PC-9 (cell line): ENCODE measurements at regions of chr1 and their contacts with region 1.

Region 1: DNA sequence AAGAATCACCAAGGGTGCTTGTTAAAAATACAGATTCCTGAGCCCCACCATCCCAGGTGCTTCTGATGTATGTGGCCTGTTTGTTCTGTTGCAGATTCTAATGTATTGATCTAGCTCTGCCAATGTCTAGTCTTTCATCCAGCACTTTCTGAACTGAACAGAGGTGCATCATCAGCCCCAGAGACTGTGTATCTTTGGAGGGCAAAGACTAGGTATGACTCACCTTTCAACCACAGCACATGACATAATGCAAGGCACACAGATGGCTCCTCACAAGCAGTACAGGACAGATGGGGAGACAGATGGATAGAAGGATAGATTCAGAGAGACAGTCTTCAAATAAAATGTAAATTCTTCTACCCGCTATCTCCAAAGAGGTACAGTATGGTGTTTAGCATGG is 32.3 kb downstream of the CD58 start:
- DNase-seq: peak in 1 of 2 experiments; percentile 76
- H3K4me3 ChIP-seq: no peak overlapping the region
- H3K27ac ChIP-seq: peak overlapping the region; percentile 85
- H3K4me1 ChIP-seq: peaks cover 55% of the 10 kb centered on the region
- H3K27me3 ChIP-seq: no peaks in the 10 kb centered on the region
- CTCF ChIP-seq: no peak

Region 2: GRCh38 chr1:116556289-116557006 is 17.9 kb after region 1 on chr1:
- CTCF ChIA-PET with region 1: no interaction called
- POLR2A ChIA-PET with region 1: no interaction called
- intact Hi-C with region 1: loop called (anchors 2 kb)
- DNase-seq: peak; percentile 71 to 91
- H3K4me3 ChIP-seq: no peak overlapping the region
- H3K27ac ChIP-seq: peak overlapping the region; percentile 64
- H3K4me1 ChIP-seq: peaks cover 54% of the 10 kb centered on the region
- H3K27me3 ChIP-seq: no peaks in the 10 kb centered on the region
- CTCF ChIP-seq: no peak

Region 3: GRCh38 chr1:116667575-116668105 is 129.1 kb after region 1 on chr1 and contains the start of gene IGSF3:
- CTCF ChIA-PET with region 1: interaction called, 14 read pairs
- POLR2A ChIA-PET with region 1: no interaction called
- intact Hi-C with region 1: no loop called
- DNase-seq: peak; percentile 67 to 77
- H3K4me3 ChIP-seq: peak within 1 kb of the TSS; percentile 91
- H3K27ac ChIP-seq: peak within 1 kb of the TSS; percentile 42
- H3K4me1 ChIP-seq: peaks cover 39% of the 10 kb centered on the region
- H3K27me3 ChIP-seq: no peaks in the 10 kb centered on the region
- CTCF ChIP-seq: no peak
- total RNA-seq, gene IGSF3: 27.8 and 30.1 TPM in 2 replicates

Region 4: GRCh38 chr1:116871772-116872146 is 333.2 kb after region 1 on chr1:
- CTCF ChIA-PET with region 1: no interaction called
- POLR2A ChIA-PET with region 1: no interaction called
- intact Hi-C with region 1: no loop called
- DNase-seq: peak in 1 of 2 experiments; percentile 34
- H3K4me3 ChIP-seq: no peak overlapping the region
- H3K27ac ChIP-seq: no peak overlapping the region
- H3K4me1 ChIP-seq: no peaks in the 10 kb centered on the region
- H3K27me3 ChIP-seq: no peaks in the 10 kb centered on the region
- CTCF ChIP-seq: no peak